Heart right ventricle (tissue), 16 donors: ENCODE measurements at regions of chr12 and their contacts with region 1.

Region 1: GRCh38 chr12:83067981-83068380 is 381.3 kb downstream of the TMTC2 start:
- DNase-seq: no peak
- ATAC-seq: no peak
- H3K4me3 ChIP-seq: no peak overlapping the region
- H3K27ac ChIP-seq: no peak overlapping the region
- H3K4me1 ChIP-seq: no peaks in the 10 kb centered on the region
- H3K27me3 ChIP-seq: no peaks in the 10 kb centered on the region
- CTCF ChIP-seq: no peak

Region 2: DNA sequence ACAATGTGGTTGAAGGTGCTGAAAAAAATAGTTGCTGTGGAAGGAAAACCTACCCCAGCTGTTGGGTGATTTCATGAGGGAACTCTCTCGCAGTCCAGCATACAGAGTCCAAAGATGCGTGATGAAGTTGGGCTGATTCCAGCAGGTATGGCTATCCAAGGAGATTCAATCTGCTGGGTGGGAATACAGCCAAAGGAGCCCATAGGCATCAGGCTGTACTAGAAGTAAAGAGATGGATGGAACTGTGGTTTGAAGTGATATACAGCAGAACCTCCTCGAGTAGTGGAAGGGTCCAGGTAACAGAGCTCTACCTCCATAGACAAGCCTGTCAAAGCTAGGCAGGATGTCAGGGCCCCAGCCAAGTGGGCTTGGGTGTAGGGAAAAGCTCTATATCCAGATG is 392.7 kb before region 1 on chr12:
- intact Hi-C with region 1: loop called in 1 of 10 experiments (anchors 5 kb)
- DNase-seq: no peak
- ATAC-seq: no peak
- H3K4me3 ChIP-seq: no peak overlapping the region
- H3K27ac ChIP-seq: no peak overlapping the region
- H3K4me1 ChIP-seq: peaks cover 0 to 13% (median 0%) of the 10 kb centered on the region in 9 donors
- H3K27me3 ChIP-seq: no peaks in the 10 kb centered on the region
- CTCF ChIP-seq: no peak

Region 3: DNA sequence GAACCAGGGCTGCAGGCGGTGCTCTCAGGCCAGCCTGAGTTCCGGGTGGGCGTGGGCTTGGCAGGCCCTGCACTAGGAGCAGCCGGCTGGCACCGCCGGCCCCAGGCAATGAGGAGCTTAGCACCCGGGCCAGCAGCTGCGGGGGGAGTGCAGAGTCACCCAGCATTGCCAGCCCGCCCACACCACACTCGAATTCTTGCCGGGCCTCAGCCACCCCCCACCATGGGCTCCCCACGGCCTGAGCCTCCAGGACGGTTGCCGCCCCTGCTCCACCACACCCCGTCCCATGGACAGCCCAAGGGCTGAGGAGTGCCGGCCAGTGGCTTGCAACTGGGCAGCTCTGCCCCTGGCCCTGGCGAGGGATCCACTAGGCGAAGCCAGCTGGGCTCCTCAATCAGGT is 72.2 kb after region 1 on chr12:
- intact Hi-C with region 1: no loop called
- DNase-seq: no peak
- ATAC-seq: peak in 1 of 8 donors; percentile 64
- H3K4me3 ChIP-seq: no peak overlapping the region
- H3K27ac ChIP-seq: no peak overlapping the region
- H3K4me1 ChIP-seq: peaks cover 0 to 5% (median under 1%) of the 10 kb centered on the region in 9 donors
- H3K27me3 ChIP-seq: no peaks in the 10 kb centered on the region
- CTCF ChIP-seq: no peak